A549 (cell line): ENCODE measurements at regions of chr3 and their contacts with region 1.

Region 1: DNA sequence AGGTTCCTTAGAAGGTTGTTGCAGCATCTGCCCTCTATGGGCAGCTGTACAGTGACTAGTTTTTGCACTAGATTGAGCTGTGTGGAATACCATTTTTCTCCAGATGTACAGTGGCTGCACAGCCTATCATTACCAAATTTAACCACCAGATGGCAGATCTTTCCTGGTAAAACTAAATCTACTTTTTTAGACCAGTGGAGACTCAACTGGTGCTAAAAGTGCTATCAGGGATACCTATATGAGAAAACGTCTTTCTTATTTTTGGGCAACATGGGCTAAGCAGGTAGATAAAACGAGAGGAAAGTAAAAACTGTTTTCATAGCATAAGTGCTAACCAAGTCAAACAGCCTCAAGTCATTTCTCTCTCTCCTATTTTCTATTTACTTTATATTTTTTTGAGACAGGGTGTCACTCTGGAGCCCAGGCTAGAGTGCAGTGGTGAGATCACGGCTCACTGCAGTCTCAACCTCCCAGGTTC is 21.2 kb downstream of the IGSF10 start:
- DNase-seq: peak; percentile 50 to 76
- ATAC-seq: peak; percentile 98 to 99
- H3K4me3 ChIP-seq: no peak overlapping the region
- H3K27ac ChIP-seq: peak overlapping the region; percentile 41 to 66; a peak in 4 of 6 replicates
- H3K4me1 ChIP-seq: peaks cover 13% of the 10 kb centered on the region
- CTCF ChIP-seq: peak; percentile 61
- EP300 ChIP-seq: no peak
- POLR2A ChIP-seq: no peak
- RAD21 ChIP-seq: peak; percentile 85 to 88

Region 2: GRCh38 chr3:151290673-151291072 is 149.0 kb before region 1 on chr3:
- CTCF ChIA-PET with region 1: interaction called, 15 read pairs
- POLR2A ChIA-PET with region 1: no interaction called
- DNase-seq: peak in 1 of 2 experiments; percentile 48
- ATAC-seq: peak; percentile 47 to 54; a peak in 1 of 6 replicates
- H3K4me3 ChIP-seq: no peak overlapping the region
- H3K27ac ChIP-seq: no peak overlapping the region
- H3K4me1 ChIP-seq: no peaks in the 10 kb centered on the region
- CTCF ChIP-seq: peak; percentile 89
- EP300 ChIP-seq: no peak
- POLR2A ChIP-seq: no peak
- RAD21 ChIP-seq: peak; percentile 92 to 94

Region 3: GRCh38 chr3:151425627-151426335 is 13.9 kb before region 1 on chr3:
- CTCF ChIA-PET with region 1: interaction called, 24 read pairs
- POLR2A ChIA-PET with region 1: no interaction called
- DNase-seq: peak in 1 of 2 experiments; percentile 12
- ATAC-seq: peak; percentile 11 to 35; a peak in 3 of 6 replicates
- H3K4me3 ChIP-seq: no peak overlapping the region
- H3K27ac ChIP-seq: peak overlapping the region in 1 of 2 experiments; percentile 26; a peak in 1 of 6 replicates
- H3K4me1 ChIP-seq: peaks cover 16% of the 10 kb centered on the region
- CTCF ChIP-seq: peak; percentile 50
- EP300 ChIP-seq: no peak
- POLR2A ChIP-seq: no peak
- RAD21 ChIP-seq: peak in 1 of 2 experiments; percentile 28; a peak in 2 of 5 replicates

Region 4: GRCh38 chr3:151468284-151468917 is 28.7 kb after region 1 on chr3:
- CTCF ChIA-PET with region 1: interaction called, 22 read pairs
- POLR2A ChIA-PET with region 1: no interaction called
- DNase-seq: peak; percentile 36 to 74
- ATAC-seq: peak; percentile 87 to 98
- H3K4me3 ChIP-seq: no peak overlapping the region
- H3K27ac ChIP-seq: peak overlapping the region in 1 of 2 experiments; percentile 22; a peak in 1 of 6 replicates
- H3K4me1 ChIP-seq: no peaks in the 10 kb centered on the region
- CTCF ChIP-seq: peak; percentile 85
- EP300 ChIP-seq: no peak
- POLR2A ChIP-seq: no peak
- RAD21 ChIP-seq: peak; percentile 71 to 76

Region 5: GRCh38 chr3:151838583-151839312 is 399.1 kb after region 1 on chr3:
- CTCF ChIA-PET with region 1: interaction called, 71 read pairs
- POLR2A ChIA-PET with region 1: interaction called, 3 read pairs
- DNase-seq: peak; percentile 27 to 89
- ATAC-seq: peak; percentile 61 to 82; a peak in 4 of 6 replicates
- H3K4me3 ChIP-seq: no peak overlapping the region
- H3K27ac ChIP-seq: peak overlapping the region; percentile 82 to 88
- H3K4me1 ChIP-seq: peaks cover 52% of the 10 kb centered on the region
- CTCF ChIP-seq: peak; percentile 82
- EP300 ChIP-seq: no peak
- POLR2A ChIP-seq: no peak
- RAD21 ChIP-seq: peak; percentile 94

Region 6: DNA sequence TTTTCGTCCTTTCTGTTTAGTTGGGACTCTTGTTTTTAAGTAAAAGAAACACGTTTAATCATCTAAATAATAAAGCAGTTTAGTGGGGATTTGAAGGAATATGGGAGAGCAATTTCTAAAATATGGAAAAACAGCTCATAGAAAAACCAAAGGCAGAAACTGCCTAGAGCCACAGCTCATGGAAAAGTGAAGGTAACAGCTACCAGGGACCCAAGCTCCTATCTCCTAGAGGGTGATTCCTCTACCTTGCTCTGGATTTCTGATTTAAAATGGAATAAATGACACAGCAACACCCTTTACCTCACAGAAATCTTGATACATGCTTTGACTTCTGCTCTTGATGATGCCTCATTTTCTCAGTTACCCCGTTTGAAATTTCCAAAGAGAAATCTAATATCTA is 405.8 kb after region 1 on chr3:
- CTCF ChIA-PET with region 1: interaction called, 71 read pairs
- POLR2A ChIA-PET with region 1: no interaction called
- DNase-seq: no peak
- ATAC-seq: no peak
- H3K4me3 ChIP-seq: no peak overlapping the region
- H3K27ac ChIP-seq: peak overlapping the region; percentile 46 to 73; a peak in 5 of 6 replicates
- H3K4me1 ChIP-seq: peaks cover 35% of the 10 kb centered on the region
- CTCF ChIP-seq: no peak
- EP300 ChIP-seq: no peak
- POLR2A ChIP-seq: no peak
- RAD21 ChIP-seq: no peak

Region 7: GRCh38 chr3:151918253-151919029 is 478.8 kb after region 1 on chr3:
- CTCF ChIA-PET with region 1: interaction called, 27 read pairs
- POLR2A ChIA-PET with region 1: no interaction called
- DNase-seq: peak; percentile 34 to 75
- ATAC-seq: peak; percentile 77 to 86
- H3K4me3 ChIP-seq: no peak overlapping the region
- H3K27ac ChIP-seq: peak overlapping the region; percentile 50 to 70; a peak in 5 of 6 replicates
- H3K4me1 ChIP-seq: peaks cover 11% of the 10 kb centered on the region; the same call in 2 of the 3 replicates
- CTCF ChIP-seq: peak; percentile 88
- EP300 ChIP-seq: no peak
- POLR2A ChIP-seq: no peak
- RAD21 ChIP-seq: peak; percentile 82 to 95